ENCODE measurements at regions of chr22 and their contacts with region 1.

Region 1: DNA sequence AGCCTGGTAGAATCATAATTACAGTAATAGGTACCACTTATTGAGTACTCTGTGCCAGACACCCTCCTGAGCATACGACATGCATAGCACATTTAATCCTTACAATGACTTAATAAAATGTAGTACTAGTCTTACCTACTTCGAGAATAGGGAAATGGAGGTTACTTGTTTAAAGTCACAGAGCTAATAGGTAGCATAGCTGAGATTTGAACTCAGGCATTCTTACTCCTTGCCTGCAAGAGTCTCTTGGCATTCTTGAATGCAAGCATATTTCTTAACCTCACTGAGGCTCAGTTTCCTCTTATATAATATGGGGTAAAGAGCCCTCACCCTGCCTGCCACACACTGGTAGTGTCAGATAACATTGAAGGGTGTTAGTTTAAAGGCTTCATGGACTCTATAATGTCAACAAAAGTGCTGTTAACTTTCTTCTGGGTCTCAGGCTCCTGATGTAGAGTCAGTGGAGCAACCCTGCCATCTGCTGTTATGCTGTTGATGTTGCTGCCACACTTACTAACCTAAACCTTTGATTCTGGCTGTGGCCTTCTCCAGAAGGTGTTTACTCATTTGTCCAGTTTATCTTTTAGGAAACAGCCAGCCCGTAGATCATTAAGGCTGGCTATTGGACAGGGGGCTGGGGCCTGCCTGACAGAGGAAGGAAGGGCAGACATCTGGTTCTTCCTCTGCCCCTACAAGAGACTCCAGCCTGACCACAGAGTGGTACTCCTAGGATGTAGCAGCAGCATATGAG is 18.9 kb downstream of the LIMK2 start:
- DNase-seq: peak; percentile 16 to 80 (median 56)
- ATAC-seq: peak; percentile 87
- H3K4me3 ChIP-seq: no peak overlapping the region
- H3K4me3 Mint-ChIP-seq: no peak overlapping the region
- H3K27ac ChIP-seq: peak overlapping the region in 1 of 2 experiments; percentile 40
- H3K27ac Mint-ChIP-seq: peak overlapping the region; percentile 92
- H3K4me1 ChIP-seq: peaks cover 25% of the 10 kb centered on the region
- H3K4me1 Mint-ChIP-seq: peaks cover 32% of the 10 kb centered on the region
- H3K27me3 ChIP-seq: no peaks in the 10 kb centered on the region
- H3K27me3 Mint-ChIP-seq: no peaks in the 10 kb centered on the region
- CTCF ChIP-seq: peak; percentile 69

Region 2: GRCh38 chr22:30763815-30764686 is 467.0 kb before region 1 on chr22:
- CTCF ChIA-PET with region 1: interaction called, 5 read pairs
- POLR2A ChIA-PET with region 1: no interaction called
- intact Hi-C with region 1: loop called in 1 of 2 experiments (anchors 1 kb)
- DNase-seq: peak in 8 of 9 experiments; percentile 7 to 78 (median 48)
- ATAC-seq: peak; percentile 90
- H3K4me3 ChIP-seq: no peak overlapping the region
- H3K4me3 Mint-ChIP-seq: no peak overlapping the region
- H3K27ac ChIP-seq: no peak overlapping the region
- H3K27ac Mint-ChIP-seq: no peak overlapping the region
- H3K4me1 ChIP-seq: no peaks in the 10 kb centered on the region
- H3K4me1 Mint-ChIP-seq: peaks cover 2% of the 10 kb centered on the region
- H3K27me3 ChIP-seq: no peaks in the 10 kb centered on the region
- H3K27me3 Mint-ChIP-seq: no peaks in the 10 kb centered on the region
- CTCF ChIP-seq: peak; percentile 52

Region 3: GRCh38 chr22:31089160-31090100 is 141.6 kb before region 1 on chr22:
- CTCF ChIA-PET with region 1: interaction called, 21 read pairs
- POLR2A ChIA-PET with region 1: no interaction called
- intact Hi-C with region 1: loop called (anchors 1 to 2 kb)
- DNase-seq: peak in 5 of 9 experiments; percentile 39 to 64 (median 54)
- ATAC-seq: no peak
- H3K4me3 ChIP-seq: no peak overlapping the region
- H3K4me3 Mint-ChIP-seq: no peak overlapping the region
- H3K27ac ChIP-seq: no peak overlapping the region
- H3K27ac Mint-ChIP-seq: no peak overlapping the region
- H3K4me1 ChIP-seq: peaks cover under 1% of the 10 kb centered on the region
- H3K4me1 Mint-ChIP-seq: peaks cover under 1% of the 10 kb centered on the region
- H3K27me3 ChIP-seq: no peaks in the 10 kb centered on the region
- H3K27me3 Mint-ChIP-seq: no peaks in the 10 kb centered on the region
- CTCF ChIP-seq: peak; percentile 57

Region 4: DNA sequence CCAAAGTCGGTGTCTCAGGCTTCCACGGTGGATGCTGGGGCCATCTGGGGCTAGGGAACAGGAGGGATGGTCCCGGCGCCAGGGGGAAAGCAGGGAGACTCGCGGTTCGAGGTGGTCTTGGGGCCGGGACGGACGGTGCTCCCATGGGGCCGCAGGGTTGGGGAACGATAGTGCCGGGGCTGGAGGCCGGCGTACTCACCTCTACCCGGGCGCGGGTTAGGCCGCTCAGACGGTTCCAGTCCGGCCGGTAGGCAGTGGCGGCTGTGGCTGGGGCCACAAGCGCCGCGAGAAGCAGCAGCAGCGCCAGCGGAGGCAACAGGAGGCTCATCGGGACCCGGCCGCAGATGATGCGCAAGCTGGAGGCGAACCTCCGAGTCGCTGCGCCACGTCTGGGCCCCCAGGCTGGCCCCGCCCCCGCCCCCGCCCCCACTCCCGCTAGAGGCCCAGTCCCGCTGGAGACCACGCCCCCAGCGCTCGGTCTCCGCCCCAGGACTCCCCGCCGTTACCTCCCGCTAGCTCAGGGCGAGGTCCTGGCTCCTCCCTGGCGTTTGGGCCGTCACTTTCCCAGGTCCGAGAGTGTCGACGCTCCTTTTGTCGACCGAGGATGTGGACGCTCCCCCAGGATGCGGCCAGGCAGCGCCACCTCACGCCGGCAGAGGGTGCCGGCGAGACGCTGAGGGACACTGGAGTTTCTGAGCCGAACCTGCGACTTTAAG is 123.7 kb before region 1 on chr22 and contains the start of gene SELENOM:
- CTCF ChIA-PET with region 1: interaction called, 11 read pairs
- POLR2A ChIA-PET with region 1: interaction called, 3 read pairs
- intact Hi-C with region 1: loop called (anchors 1 to 5 kb)
- DNase-seq: peak; percentile 69 to 94 (median 85)
- ATAC-seq: peak; percentile 96
- H3K4me3 ChIP-seq: peak within 1 kb of the TSS; percentile 80 to 84
- H3K4me3 Mint-ChIP-seq: peak within 1 kb of the TSS; percentile 98
- H3K27ac ChIP-seq: peak within 1 kb of the TSS; percentile 72 to 80
- H3K27ac Mint-ChIP-seq: peak within 1 kb of the TSS; percentile 91
- H3K4me1 ChIP-seq: peaks cover 17% of the 10 kb centered on the region
- H3K4me1 Mint-ChIP-seq: peaks cover 25% of the 10 kb centered on the region
- H3K27me3 ChIP-seq: no peaks in the 10 kb centered on the region
- H3K27me3 Mint-ChIP-seq: no peaks in the 10 kb centered on the region
- CTCF ChIP-seq: peak; percentile 70
- total RNA-seq, gene SELENOM: 55.6 to 62.2 TPM

Region 5: GRCh38 chr22:31199183-31199582 is 31.9 kb before region 1 on chr22:
- CTCF ChIA-PET with region 1: interaction called, 5 read pairs
- POLR2A ChIA-PET with region 1: no interaction called
- intact Hi-C with region 1: loop called in 1 of 2 experiments (anchors 5 kb)
- DNase-seq: peak in 2 of 9 experiments; percentile 12 to 30
- ATAC-seq: no peak
- H3K4me3 ChIP-seq: no peak overlapping the region
- H3K4me3 Mint-ChIP-seq: no peak overlapping the region
- H3K27ac ChIP-seq: no peak overlapping the region
- H3K27ac Mint-ChIP-seq: no peak overlapping the region
- H3K4me1 ChIP-seq: no peaks in the 10 kb centered on the region
- H3K4me1 Mint-ChIP-seq: no peaks in the 10 kb centered on the region
- H3K27me3 ChIP-seq: no peaks in the 10 kb centered on the region
- H3K27me3 Mint-ChIP-seq: no peaks in the 10 kb centered on the region
- CTCF ChIP-seq: no peak

Measured in CD8-positive, alpha-beta T cell (primary cell).